H1 (cell line): ENCODE measurements at regions of chr3 and their contacts with region 1.

Region 1: GRCh38 chr3:159499031-159499793 is 489.4 kb upstream of the IL12A start:
- DNase-seq: no peak
- H3K4me3 ChIP-seq: no peak overlapping the region
- H3K27ac ChIP-seq: no peak overlapping the region
- H3K4me1 ChIP-seq: no peaks in the 10 kb centered on the region
- H3K27me3 ChIP-seq: no peaks in the 10 kb centered on the region
- CTCF ChIP-seq: no peak
- EP300 ChIP-seq: no peak
- POLR2A ChIP-seq: no peak
- RAD21 ChIP-seq: no peak

Region 2: GRCh38 chr3:159266779-159267178 is 232.4 kb before region 1 on chr3:
- CTCF ChIA-PET with region 1: interaction called, 10 read pairs
- POLR2A ChIA-PET with region 1: no interaction called
- DNase-seq: peak; percentile 17 to 77
- H3K4me3 ChIP-seq: no peak overlapping the region
- H3K27ac ChIP-seq: no peak overlapping the region
- H3K4me1 ChIP-seq: no peaks in the 10 kb centered on the region
- H3K27me3 ChIP-seq: no peaks in the 10 kb centered on the region
- CTCF ChIP-seq: peak; percentile 56 to 77 (median 77)
- EP300 ChIP-seq: no peak
- POLR2A ChIP-seq: no peak
- RAD21 ChIP-seq: peak; percentile 86 to 89

Region 3: GRCh38 chr3:159486586-159486985 is 12.6 kb before region 1 on chr3:
- CTCF ChIA-PET with region 1: interaction called, 19 read pairs
- POLR2A ChIA-PET with region 1: no interaction called
- DNase-seq: peak; percentile 17 to 52
- H3K4me3 ChIP-seq: no peak overlapping the region
- H3K27ac ChIP-seq: no peak overlapping the region
- H3K4me1 ChIP-seq: no peaks in the 10 kb centered on the region
- H3K27me3 ChIP-seq: peaks cover 0 to 1% (median 0%) of the 10 kb centered on the region in 4 experiments; a peak in 1 of 7 replicates
- CTCF ChIP-seq: peak; percentile 52 to 91 (median 82)
- EP300 ChIP-seq: 0 out of 3 replicates have a peak, but pooled peaks of 1 of the 2 experiments have one; percentile 54
- POLR2A ChIP-seq: no peak
- RAD21 ChIP-seq: peak; percentile 67 to 70

Region 4: DNA sequence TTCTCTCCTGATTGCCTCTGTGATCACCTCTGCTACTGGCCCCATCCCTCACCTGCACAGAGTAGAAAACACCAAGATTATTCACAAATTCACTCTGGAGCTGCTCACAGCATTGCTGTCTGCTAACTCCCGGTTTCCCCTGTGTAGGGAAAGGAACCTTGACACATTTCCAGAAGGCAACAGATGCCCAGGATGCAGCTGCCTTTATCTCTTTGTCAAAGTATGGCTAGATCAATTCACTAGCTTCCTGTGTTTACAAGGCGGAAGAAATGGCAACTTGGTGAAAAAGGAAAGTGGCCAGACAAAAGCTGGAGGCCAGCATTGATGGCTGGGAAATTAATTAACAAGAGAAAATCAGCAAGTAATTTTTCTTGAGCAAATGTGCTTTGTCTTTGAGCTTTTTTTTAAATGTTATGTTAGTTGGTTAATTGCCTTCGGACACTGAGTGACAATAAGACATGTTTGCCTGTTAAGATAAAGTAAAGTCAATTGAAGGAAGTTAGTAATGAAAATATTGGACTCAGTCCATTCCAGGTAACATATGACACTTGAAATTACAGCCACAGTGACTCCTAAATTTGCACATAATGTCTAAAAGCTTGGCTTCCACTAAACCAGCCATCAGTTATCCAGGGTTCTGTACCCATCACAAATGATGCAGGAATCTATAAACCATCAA is 94.9 kb after region 1 on chr3:
- CTCF ChIA-PET with region 1: no interaction called
- POLR2A ChIA-PET with region 1: no interaction called
- DNase-seq: no peak
- H3K4me3 ChIP-seq: no peak overlapping the region
- H3K27ac ChIP-seq: no peak overlapping the region
- H3K4me1 ChIP-seq: no peaks in the 10 kb centered on the region
- H3K27me3 ChIP-seq: no peaks in the 10 kb centered on the region
- CTCF ChIP-seq: no peak
- EP300 ChIP-seq: no peak
- POLR2A ChIP-seq: no peak
- RAD21 ChIP-seq: no peak